ENCODE measurements at regions of chr17 and their contacts with region 1.

Region 1: DNA sequence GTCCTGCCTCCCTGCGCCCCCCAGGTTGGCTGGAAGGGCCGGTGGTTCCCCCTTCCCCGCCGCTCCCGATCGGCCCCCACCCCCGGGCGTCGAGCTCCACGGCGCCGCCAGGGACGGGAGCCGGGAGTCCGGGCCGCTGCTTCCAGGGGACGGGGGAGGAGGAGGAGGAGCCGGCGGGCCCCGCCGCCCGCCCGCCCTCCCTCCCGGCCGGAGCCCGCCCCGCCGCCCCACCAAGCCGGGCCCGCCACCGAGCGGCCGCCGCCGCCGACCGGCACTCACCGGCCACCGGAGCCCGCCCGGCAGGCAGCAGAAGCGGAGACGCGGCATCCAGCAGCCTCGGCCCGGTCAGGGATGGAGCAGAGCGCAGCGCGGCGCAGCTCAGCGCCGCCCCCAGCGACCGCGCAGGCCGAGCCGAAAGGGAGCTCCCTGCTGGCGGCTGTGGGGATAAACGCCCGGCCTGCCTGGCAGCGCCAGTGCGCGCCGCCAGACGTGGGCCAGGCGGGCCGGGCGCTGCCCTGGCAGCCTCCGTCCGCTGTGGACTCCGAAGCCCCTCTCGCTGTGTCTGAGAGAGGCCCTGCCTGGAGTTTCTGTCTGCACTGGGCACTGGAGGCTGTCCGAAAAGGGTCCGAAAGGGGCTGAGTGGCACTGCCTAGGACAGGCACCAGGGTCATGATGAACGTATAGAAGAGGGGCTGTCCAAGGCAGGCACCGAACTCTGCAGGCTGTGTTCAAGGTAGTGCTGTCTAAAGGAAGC is at the start of gene MYO18A:
- DNase-seq: peak; percentile 70 to 81 (median 73)
- H3K4me3 ChIP-seq: no peak within 1 kb of the TSS
- H3K4me3 Mint-ChIP-seq: peak within 1 kb of the TSS; percentile 59 to 71 (median 66)
- H3K27ac ChIP-seq: peak within 1 kb of the TSS; percentile 37
- H3K27ac Mint-ChIP-seq: peak within 1 kb of the TSS in 2 of 7 donors; percentile 46 to 79
- H3K4me1 ChIP-seq: peaks cover 22% of the 10 kb centered on the region
- H3K4me1 Mint-ChIP-seq: peaks cover 11 to 32% (median 20%) of the 10 kb centered on the region in 4 donors
- H3K27me3 ChIP-seq: no peaks in the 10 kb centered on the region
- H3K27me3 Mint-ChIP-seq: no peaks in the 10 kb centered on the region
- total RNA-seq, gene MYO18A: 134 to 136 TPM

Region 2: GRCh38 chr17:29116804-29117772 is 63.1 kb before region 1 on chr17:
- CTCF ChIA-PET with region 1: interaction called, 10 read pairs
- POLR2A ChIA-PET with region 1: interaction called, 3 read pairs
- intact Hi-C with region 1: no loop called
- DNase-seq: peak; percentile 66 to 73 (median 71)
- H3K4me3 ChIP-seq: no peak overlapping the region
- H3K4me3 Mint-ChIP-seq: peak overlapping the region in 1 of 8 donors; percentile 15
- H3K27ac ChIP-seq: no peak overlapping the region
- H3K27ac Mint-ChIP-seq: peak overlapping the region in 4 of 7 donors; percentile 43 to 75 (median 60)
- H3K4me1 ChIP-seq: peaks cover 4% of the 10 kb centered on the region
- H3K4me1 Mint-ChIP-seq: peaks cover 4 to 9% (median 8%) of the 10 kb centered on the region in 4 donors
- H3K27me3 ChIP-seq: no peaks in the 10 kb centered on the region
- H3K27me3 Mint-ChIP-seq: no peaks in the 10 kb centered on the region

Region 3: GRCh38 chr17:29133146-29133713 is 47.0 kb before region 1 on chr17:
- CTCF ChIA-PET with region 1: interaction called, 465 read pairs
- POLR2A ChIA-PET with region 1: interaction called, 24 read pairs
- intact Hi-C with region 1: no loop called
- DNase-seq: no peak
- H3K4me3 ChIP-seq: no peak overlapping the region
- H3K4me3 Mint-ChIP-seq: no peak overlapping the region
- H3K27ac ChIP-seq: no peak overlapping the region
- H3K27ac Mint-ChIP-seq: peak overlapping the region in 3 of 7 donors; percentile 30 to 53 (median 46)
- H3K4me1 ChIP-seq: peaks cover 62% of the 10 kb centered on the region
- H3K4me1 Mint-ChIP-seq: peaks cover 30 to 72% (median 43%) of the 10 kb centered on the region in 4 donors
- H3K27me3 ChIP-seq: no peaks in the 10 kb centered on the region
- H3K27me3 Mint-ChIP-seq: no peaks in the 10 kb centered on the region

Region 4: DNA sequence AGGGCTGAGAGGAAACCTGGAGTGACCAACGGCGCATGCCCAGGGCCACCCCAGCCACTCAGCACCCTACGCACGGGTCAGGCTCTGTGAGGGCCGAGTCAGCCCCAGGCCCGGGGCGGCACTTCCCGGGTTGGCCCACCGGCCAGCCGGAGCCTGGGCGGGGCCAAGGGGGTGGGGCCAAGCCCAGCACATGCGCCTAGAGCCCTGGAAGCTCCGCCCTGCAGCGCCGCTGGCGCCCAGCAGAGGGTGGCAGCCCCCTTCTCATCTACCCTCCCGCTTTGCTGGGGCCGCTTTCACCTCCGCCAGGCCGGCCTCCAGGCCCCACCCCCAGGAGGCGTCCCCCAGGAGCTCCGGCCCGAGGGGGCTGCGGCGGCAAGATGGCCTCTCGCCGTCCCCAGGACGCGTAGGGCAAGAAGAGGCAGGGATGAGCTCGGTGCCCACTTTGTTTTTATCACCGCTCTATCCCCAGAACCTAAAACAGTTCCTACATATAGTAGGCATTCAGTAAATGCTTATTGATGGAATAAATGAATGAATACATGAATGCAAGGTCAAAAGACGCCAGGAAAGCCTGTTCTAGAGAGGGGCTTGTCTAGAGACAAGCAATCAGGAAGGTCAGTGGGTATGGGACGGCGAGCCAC is 31.3 kb before region 1 on chr17:
- CTCF ChIA-PET with region 1: interaction called, 465 read pairs
- POLR2A ChIA-PET with region 1: interaction called, 70 read pairs
- intact Hi-C with region 1: loop called (anchors 1 kb)
- DNase-seq: peak; percentile 88 to 91 (median 89)
- H3K4me3 ChIP-seq: peak overlapping the region; percentile 41 to 42
- H3K4me3 Mint-ChIP-seq: peak overlapping the region; percentile 68 to 84 (median 75)
- H3K27ac ChIP-seq: peak overlapping the region; percentile 53
- H3K27ac Mint-ChIP-seq: peak overlapping the region; percentile 66 to 92 (median 90)
- H3K4me1 ChIP-seq: peaks cover 27% of the 10 kb centered on the region
- H3K4me1 Mint-ChIP-seq: peaks cover 23 to 62% (median 33%) of the 10 kb centered on the region in 4 donors
- H3K27me3 ChIP-seq: no peaks in the 10 kb centered on the region
- H3K27me3 Mint-ChIP-seq: no peaks in the 10 kb centered on the region

Region 5: DNA sequence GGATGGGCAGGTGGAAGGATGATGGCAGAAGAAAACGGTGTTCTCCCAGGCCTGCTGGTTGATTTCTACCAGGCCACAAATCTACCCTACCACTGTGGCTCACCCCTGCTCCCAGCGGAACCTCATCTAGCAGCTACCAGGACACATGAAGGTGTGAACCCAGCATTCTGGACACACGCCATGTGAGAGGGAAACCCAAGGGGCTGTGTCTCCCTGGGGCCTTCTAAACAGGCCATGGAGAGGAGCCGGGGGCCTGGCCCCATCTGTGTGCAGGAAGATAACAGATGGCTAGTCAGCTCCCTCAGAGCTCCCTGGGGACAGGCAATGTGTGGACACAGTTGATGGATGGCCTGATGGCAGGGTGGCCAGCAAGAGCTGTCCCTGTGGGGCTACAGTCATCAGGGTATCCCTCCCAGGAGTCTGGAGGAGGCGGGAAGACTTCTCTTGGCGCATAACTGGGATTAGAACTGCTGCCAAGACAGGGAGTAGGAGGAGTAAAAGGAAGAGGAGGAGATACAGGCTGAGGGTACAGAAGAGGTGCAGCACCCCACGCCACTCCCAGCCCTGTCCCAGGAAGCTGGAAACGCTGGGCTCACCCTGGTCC is 17.4 kb before region 1 on chr17:
- CTCF ChIA-PET with region 1: interaction called, 20 read pairs
- POLR2A ChIA-PET with region 1: interaction called, 7 read pairs
- intact Hi-C with region 1: no loop called
- DNase-seq: no peak
- H3K4me3 ChIP-seq: no peak overlapping the region
- H3K4me3 Mint-ChIP-seq: no peak overlapping the region
- H3K27ac ChIP-seq: no peak overlapping the region
- H3K27ac Mint-ChIP-seq: no peak overlapping the region
- H3K4me1 ChIP-seq: peaks cover 13% of the 10 kb centered on the region
- H3K4me1 Mint-ChIP-seq: peaks cover 5 to 26% (median 17%) of the 10 kb centered on the region in 4 donors
- H3K27me3 ChIP-seq: no peaks in the 10 kb centered on the region
- H3K27me3 Mint-ChIP-seq: no peaks in the 10 kb centered on the region

Region 6: DNA sequence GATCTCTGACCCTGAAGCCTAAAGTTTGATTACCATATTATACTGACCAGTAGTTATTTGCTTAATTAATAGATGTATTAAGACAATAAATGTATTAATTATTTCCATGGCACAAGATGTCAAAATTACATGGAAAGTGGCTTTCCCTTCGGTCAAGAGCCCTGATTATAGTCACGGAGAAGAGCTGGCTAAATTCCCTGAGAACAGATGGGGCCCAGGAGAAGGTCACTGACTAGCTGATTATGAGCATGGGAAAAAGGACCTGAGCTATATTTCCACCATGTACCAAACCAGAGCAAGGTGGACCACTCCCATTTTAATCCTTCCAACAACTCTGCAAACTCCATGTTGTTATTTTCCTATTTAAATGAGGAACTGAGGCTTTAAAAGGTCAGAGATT is 12.9 kb after region 1 on chr17:
- CTCF ChIA-PET with region 1: interaction called, 11 read pairs
- POLR2A ChIA-PET with region 1: interaction called, 3 read pairs
- intact Hi-C with region 1: no loop called
- DNase-seq: no peak
- H3K4me3 ChIP-seq: no peak overlapping the region
- H3K4me3 Mint-ChIP-seq: no peak overlapping the region
- H3K27ac ChIP-seq: no peak overlapping the region
- H3K27ac Mint-ChIP-seq: no peak overlapping the region
- H3K4me1 ChIP-seq: no peaks in the 10 kb centered on the region
- H3K4me1 Mint-ChIP-seq: no peaks in the 10 kb centered on the region
- H3K27me3 ChIP-seq: no peaks in the 10 kb centered on the region
- H3K27me3 Mint-ChIP-seq: peaks cover 4 to 17% of the 10 kb centered on the region in 2 donors

Region 7: GRCh38 chr17:29293890-29294579 is 113.8 kb after region 1 on chr17 and contains the start of gene NUFIP2:
- CTCF ChIA-PET with region 1: no interaction called
- POLR2A ChIA-PET with region 1: interaction called, 13 read pairs
- intact Hi-C with region 1: no loop called
- DNase-seq: peak; percentile 95 to 99 (median 98)
- H3K4me3 ChIP-seq: peak within 1 kb of the TSS; percentile 77 to 79
- H3K4me3 Mint-ChIP-seq: peak within 1 kb of the TSS; percentile 99 to 100 (median 100)
- H3K27ac ChIP-seq: peak within 1 kb of the TSS; percentile 77
- H3K27ac Mint-ChIP-seq: peak within 1 kb of the TSS; percentile 98 to 100 (median 99)
- H3K4me1 ChIP-seq: peaks cover 41% of the 10 kb centered on the region
- H3K4me1 Mint-ChIP-seq: peaks cover 20 to 51% (median 34%) of the 10 kb centered on the region in 4 donors
- H3K27me3 ChIP-seq: no peaks in the 10 kb centered on the region
- H3K27me3 Mint-ChIP-seq: no peaks in the 10 kb centered on the region
- total RNA-seq, gene NUFIP2: 77.5 to 85.1 TPM